Posterior vena cava (tissue), 2 donors: ENCODE measurements at regions of chr14 and their contacts with region 1.

Region 1: GRCh38 chr14:32785585-32785984 is 153.1 kb upstream of the NPAS3 start:
- DNase-seq: no peak

Region 2: DNA sequence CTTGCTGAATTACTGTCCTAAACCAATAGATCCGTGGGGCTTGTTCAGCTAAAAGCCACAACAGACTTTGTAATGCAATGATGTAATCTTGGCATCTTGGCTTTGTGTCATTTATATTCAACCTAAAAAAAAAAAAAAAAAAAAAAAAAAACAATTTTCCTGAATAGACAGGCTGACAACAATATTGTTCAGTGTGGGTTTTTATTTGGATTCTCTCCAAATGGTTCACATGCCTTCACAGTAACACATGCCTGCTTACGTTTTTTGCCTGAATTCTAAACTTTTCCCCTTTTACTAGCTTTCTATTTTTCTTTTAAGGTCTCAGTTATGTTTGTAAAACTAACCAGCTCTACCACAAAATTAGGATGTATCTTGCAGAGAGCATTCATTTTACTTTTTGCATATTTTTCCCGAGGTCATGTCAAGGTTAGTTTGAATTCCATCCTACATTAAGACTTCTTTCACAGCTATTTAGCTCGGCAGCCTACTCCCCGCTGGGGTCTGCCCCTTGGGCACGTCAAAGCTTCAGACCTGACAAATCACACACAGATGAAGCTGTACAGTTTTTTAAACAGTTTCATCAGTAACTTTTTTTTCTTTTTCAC is 60.6 kb before region 1 on chr14:
- intact Hi-C with region 1: no loop called
- DNase-seq: no peak

Region 3: DNA sequence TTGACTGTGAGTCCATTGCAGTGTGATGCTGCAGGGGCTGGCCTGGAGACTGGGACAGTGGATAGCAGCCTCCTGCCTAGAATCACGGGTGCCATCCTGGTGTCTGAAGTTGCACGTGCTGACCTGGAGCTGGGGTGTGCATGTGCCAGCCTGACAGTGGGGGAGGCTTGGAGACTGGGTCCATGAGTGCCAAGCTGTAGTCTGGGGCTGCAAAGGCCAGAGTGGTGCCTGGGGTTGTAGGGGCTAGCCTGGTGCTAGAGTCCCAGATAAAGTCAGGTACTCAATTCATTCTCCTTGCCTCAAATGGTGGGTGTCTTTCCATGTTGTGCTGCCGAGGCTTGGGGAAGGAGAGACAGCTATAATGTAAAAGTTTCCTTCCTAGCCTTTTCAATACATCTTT is 28.8 kb before region 1 on chr14:
- intact Hi-C with region 1: loop called in 1 of 2 experiments (anchors 1 kb)
- DNase-seq: no peak